Activated CD8-positive, alpha-beta T cell treated with anti-CD3 and anti-CD28 coated beads for 36 hours (primary cell): ENCODE measurements at regions of chr5 and their contacts with region 1.

Region 1: DNA sequence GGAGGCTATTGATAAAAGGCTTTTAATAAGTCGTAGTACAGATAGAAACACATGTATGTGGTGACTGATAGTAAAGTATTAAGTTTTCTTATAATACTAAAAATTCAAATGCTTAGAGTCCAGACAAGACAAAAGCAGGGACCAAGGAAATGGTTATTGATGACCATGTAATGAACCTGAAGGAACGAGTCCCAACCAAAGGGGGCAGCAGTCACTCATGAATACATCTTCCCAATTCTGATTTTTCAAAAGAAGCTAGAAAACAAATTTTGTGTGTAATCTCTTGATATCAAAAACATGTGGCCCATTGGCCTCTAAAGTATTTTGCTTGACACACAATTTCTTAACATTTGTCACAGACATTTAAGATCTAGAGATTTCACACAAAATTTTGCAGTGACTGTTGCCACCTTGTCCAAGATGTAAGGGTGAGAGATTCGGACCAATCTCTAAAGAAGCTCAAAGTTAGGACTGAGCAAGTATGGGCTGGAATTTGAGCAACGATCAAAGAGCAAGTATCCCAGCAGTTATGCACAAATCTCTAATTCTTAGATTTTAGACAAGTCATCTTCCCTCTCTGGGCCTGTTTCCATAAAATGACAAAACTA is 66.8 kb downstream of the ARL15 start:
- DNase-seq: peak; percentile 62
- ATAC-seq: no peak
- H3K4me3 Mint-ChIP-seq: no peak overlapping the region
- H3K27ac Mint-ChIP-seq: no peak overlapping the region
- H3K4me1 Mint-ChIP-seq: peaks cover 8% of the 10 kb centered on the region
- H3K27me3 Mint-ChIP-seq: no peaks in the 10 kb centered on the region
- CTCF ChIP-seq: peak; percentile 76

Region 2: DNA sequence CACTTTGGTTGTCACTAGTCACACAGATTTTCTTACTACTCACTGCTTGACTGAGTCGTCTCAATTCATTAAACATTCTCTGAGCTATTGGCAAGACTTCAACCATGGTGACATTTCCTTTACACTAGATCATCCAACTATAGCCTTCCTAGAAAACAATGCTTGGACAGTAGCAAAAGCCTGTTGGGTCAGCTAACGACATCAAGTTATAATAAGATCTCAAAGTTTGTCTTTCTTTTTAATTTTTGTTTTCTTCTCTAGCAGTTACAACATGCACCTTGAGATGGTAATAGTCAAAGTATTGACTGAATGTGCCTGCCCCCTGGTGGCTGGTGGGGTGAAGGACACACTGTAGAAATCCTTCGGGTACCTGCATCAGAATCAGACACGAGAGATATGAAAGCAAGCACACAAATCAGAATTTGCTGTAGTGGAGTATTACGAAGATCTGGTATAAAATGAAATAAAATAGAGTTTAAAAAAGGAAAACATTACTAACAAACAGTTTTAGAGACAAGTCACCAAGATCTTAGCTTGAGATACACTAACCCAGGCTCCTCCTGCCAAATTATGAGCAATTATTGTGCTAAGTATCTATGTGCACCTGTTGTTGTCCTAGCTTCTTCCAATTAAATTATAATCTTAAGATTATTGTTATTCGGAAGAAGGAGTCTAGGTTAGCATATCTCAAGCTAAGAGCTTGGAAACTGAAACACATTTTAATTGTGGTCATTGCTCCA is 14.4 kb before region 1 on chr5:
- CTCF ChIA-PET with region 1: interaction called, 18 read pairs
- POLR2A ChIA-PET with region 1: interaction called, 3 read pairs
- intact Hi-C with region 1: no loop called
- DNase-seq: peak; percentile 87
- ATAC-seq: peak; percentile 93
- H3K4me3 Mint-ChIP-seq: no peak overlapping the region
- H3K27ac Mint-ChIP-seq: no peak overlapping the region
- H3K4me1 Mint-ChIP-seq: peaks cover 7% of the 10 kb centered on the region
- H3K27me3 Mint-ChIP-seq: no peaks in the 10 kb centered on the region
- CTCF ChIP-seq: peak; percentile 90

Region 3: DNA sequence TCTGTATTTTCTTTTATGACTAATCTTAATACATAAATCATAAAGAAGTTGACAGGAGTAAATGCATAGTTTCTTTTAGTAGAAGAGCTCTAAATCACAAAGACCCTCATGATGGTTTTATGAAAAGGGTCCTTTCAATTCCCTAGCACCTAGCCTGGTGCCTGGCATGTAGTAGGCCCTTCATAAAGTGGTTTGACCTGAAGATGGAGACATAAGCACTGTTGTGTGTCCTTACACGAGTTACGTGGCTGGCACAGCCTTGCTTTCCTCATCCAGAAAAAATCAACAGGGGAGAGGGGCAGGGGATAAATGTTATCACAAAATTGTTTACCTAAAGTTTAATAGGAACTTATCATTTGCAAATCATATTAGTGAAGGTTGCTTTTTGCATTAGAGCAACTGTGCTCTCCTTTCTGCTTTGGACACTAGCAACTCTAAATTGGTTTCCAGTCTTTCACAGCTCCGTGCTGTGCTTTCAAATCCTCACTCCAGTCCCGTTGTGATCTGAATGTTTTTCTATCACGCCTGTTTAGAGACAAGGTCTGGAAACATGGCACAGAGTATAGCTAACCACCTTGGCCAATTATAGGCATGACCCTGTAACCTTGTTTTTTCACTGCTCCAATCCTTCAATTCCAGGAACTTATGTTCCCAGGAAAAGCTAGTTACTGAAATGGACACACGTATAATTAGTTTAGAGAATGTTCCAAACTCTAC is 11.1 kb after region 1 on chr5:
- CTCF ChIA-PET with region 1: interaction called, 14 read pairs
- POLR2A ChIA-PET with region 1: no interaction called
- intact Hi-C with region 1: no loop called
- DNase-seq: no peak
- ATAC-seq: no peak
- H3K4me3 Mint-ChIP-seq: no peak overlapping the region
- H3K27ac Mint-ChIP-seq: no peak overlapping the region
- H3K4me1 Mint-ChIP-seq: peaks cover 28% of the 10 kb centered on the region
- H3K27me3 Mint-ChIP-seq: no peaks in the 10 kb centered on the region
- CTCF ChIP-seq: no peak

Region 4: GRCh38 chr5:54310433-54311175 is 67.0 kb after region 1 on chr5 and contains the start of gene ARL15:
- CTCF ChIA-PET with region 1: interaction called, 14 read pairs
- POLR2A ChIA-PET with region 1: no interaction called
- intact Hi-C with region 1: loop called (anchors 5 kb)
- DNase-seq: peak; percentile 98
- ATAC-seq: peak; percentile 95
- H3K4me3 Mint-ChIP-seq: peak within 1 kb of the TSS; percentile 78
- H3K27ac Mint-ChIP-seq: peak within 1 kb of the TSS; percentile 85
- H3K4me1 Mint-ChIP-seq: peaks cover 26% of the 10 kb centered on the region
- H3K27me3 Mint-ChIP-seq: peaks cover 5% of the 10 kb centered on the region
- CTCF ChIP-seq: no peak
- total RNA-seq, gene ARL15: 5.7 to 6.3 TPM

Region 5: GRCh38 chr5:54415896-54416601 is 172.5 kb after region 1 on chr5:
- CTCF ChIA-PET with region 1: interaction called, 24 read pairs
- POLR2A ChIA-PET with region 1: no interaction called
- intact Hi-C with region 1: loop called (anchors 2 kb)
- DNase-seq: no peak
- ATAC-seq: no peak
- H3K4me3 Mint-ChIP-seq: no peak overlapping the region
- H3K27ac Mint-ChIP-seq: no peak overlapping the region
- H3K4me1 Mint-ChIP-seq: no peaks in the 10 kb centered on the region
- H3K27me3 Mint-ChIP-seq: no peaks in the 10 kb centered on the region
- CTCF ChIP-seq: no peak

Region 6: DNA sequence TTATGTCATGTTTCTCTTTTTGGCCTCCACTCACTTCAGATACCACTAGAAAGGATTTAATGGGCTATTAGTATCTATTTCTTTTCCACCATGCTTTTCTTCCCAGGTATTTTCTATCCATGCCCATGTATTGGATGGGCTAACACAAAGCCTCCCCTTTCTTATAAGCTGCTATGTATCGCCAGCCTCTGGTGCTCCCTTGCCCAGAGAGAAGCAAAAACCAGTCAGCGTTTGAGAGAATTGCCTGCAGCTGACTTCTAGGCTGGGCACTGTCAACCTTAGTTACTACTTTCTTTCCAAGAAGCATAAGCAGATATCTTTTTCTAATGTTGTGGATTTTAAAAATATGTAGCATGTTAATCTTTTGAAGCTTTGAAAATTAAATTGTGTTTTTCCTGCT is 181.7 kb after region 1 on chr5:
- CTCF ChIA-PET with region 1: interaction called, 12 read pairs
- POLR2A ChIA-PET with region 1: no interaction called
- intact Hi-C with region 1: no loop called
- DNase-seq: no peak
- ATAC-seq: no peak
- H3K4me3 Mint-ChIP-seq: no peak overlapping the region
- H3K27ac Mint-ChIP-seq: no peak overlapping the region
- H3K4me1 Mint-ChIP-seq: no peaks in the 10 kb centered on the region
- H3K27me3 Mint-ChIP-seq: peaks cover 10% of the 10 kb centered on the region
- CTCF ChIP-seq: no peak

Region 7: DNA sequence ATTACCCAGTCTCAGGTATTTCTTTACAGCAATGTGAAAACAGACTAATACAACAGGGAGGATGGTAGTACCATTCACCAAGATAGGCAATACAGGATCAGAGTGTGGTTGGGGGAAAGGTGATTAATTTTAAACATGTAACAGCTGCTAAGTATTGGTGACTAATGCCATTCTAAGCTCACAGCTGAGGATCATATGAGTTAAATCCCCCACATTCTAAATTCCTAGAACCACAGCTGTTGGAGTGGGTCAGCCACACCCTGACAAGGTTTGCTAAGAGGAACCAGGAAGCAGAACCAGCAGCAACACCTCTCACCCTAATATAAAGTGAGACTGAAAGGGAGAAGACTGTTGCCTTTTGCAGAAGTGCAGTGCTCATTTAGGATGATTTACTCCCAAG is 236.7 kb after region 1 on chr5:
- CTCF ChIA-PET with region 1: no interaction called
- POLR2A ChIA-PET with region 1: no interaction called
- intact Hi-C with region 1: no loop called
- DNase-seq: no peak
- ATAC-seq: no peak
- H3K4me3 Mint-ChIP-seq: no peak overlapping the region
- H3K27ac Mint-ChIP-seq: no peak overlapping the region
- H3K4me1 Mint-ChIP-seq: no peaks in the 10 kb centered on the region
- H3K27me3 Mint-ChIP-seq: peaks cover 15% of the 10 kb centered on the region
- CTCF ChIP-seq: no peak